ENCODE measurements at regions of chr16 and their contacts with region 1.

Region 1: DNA sequence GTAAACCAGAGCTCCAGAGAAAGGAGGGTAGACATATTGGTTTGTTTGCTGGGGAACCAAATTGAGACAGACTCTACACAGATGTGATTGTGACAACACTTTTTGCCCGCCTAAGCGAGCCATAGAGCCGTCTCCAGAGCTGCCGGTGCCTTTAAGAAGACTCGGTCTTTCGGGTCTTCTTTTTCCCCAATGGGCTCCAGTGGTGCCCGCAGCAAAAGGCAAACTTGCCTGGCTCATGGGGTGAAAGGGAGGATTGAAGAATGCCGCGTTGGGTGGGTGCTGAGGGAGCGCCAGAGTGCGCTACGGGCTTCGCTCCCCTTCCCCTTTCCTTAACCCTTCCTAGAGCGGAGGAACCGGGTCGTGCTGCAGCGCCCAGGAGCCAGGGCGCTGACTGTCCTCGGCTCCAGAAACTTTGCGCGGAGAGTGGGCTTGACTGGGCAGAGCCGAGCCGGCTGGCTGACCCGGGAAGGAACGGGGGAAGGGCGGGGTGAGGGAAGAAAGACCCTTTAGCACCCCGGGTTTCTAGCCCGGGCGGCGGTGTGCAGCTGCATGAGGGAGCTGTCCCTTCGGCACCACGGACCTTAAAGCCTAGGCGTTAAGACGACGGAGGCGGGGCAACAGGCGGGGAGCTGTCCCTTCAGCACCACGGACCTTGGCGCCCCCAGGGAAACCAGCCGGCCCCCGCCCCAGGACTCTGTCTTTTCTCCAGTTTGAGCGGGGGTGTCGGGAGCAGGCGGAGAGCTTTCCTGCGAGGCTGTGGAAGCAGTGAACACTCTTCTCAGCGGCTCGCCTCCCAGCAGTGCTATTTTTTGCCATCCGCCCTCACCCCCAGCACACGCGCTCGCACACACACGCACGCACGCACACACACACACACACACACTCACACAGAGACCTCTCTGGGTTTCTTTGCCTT is at the start of gene CACNG3:
- DNase-seq: no peak
- H3K4me3 ChIP-seq: no peak within 1 kb of the TSS
- CTCF ChIP-seq: no peak

Region 2: GRCh38 chr16:24198807-24199533 is 56.7 kb before region 1 on chr16:
- in situ Hi-C with region 1: loop called (anchors 5 kb)
- DNase-seq: no peak
- H3K4me3 ChIP-seq: no peak overlapping the region
- CTCF ChIP-seq: no peak

Region 3: DNA sequence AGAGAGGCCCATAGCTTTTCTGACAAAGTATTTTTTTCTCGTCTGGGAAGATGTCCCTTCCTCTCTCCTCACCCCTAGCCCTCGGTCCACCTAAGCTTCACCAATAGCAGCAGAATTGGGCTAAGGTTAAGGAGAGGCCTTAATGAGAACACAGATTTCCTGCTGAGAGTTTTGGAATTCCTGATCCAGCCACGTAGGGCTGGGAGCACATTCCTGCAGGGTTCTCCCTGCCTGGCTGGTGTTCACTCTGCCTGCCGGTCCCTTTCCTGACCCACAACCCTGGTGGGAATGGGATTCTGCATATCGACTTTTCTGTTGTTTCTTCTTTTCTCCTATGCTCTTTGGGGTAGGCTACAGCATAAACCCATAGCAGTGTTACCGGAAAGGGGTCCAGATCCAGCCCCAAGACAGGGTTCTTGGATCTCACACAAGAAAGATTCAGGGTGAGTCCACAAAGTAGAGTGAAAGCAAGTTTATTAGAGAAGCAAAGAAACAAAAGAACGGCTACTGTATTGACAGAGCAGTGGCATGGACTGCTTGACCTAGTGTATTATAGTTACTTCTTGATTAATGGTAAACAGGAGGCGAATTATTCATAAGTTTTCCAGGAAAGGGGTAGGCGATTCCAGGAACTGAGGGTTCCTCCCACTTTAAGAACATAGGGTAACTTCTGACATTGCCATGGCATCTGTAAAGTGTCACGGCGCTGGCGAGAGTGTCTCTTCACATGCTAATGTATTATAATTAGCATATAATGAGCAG is 93.4 kb after region 1 on chr16:
- in situ Hi-C with region 1: no loop called
- DNase-seq: no peak
- H3K4me3 ChIP-seq: no peak overlapping the region
- CTCF ChIP-seq: no peak